ENCODE measurements at regions of chr2 and their contacts with region 1.

Region 1: DNA sequence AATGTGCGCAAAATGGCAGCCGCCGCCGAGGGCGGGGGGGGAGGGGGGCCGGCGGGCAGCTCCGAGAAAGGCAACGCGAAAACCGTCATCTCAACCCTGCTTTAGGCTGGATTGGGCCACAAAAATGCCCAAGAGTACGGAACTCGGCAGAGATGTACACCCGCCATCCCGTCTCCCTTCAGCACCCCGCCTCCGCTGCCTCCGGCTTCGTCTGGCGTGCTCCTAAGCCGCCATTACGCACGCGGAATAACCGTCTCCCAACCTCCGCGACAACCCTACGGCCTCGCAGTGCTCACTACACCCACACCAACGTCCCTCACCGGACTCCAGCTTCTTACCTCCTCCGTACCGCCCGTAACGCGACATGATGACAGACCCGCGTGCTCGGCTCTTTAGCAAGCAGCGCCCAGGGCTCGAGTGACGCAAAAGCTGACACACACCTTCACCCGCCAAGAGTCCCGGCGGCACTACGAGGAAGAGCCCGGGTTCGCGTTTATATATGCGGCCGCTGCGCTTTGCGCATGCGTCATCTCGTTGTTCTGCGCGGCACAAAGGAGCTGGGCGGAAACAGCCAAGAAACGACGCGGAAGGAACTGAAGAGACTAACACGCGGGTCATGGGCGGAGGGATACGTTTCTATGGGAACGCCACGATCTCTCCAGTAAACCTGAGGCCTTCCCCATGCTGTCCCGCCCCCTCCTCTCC is at the start of gene SRSF7:
- DNase-seq: peak; percentile 94 to 99 (median 98)
- ATAC-seq: peak; percentile 71 to 75
- H3K4me3 Mint-ChIP-seq: peak within 1 kb of the TSS; percentile 97 to 100 (median 99)
- H3K27ac Mint-ChIP-seq: peak within 1 kb of the TSS; percentile 96 to 100 (median 100)
- H3K4me1 Mint-ChIP-seq: peaks cover 33 to 63% (median 56%) of the 10 kb centered on the region in 4 donors
- H3K27me3 Mint-ChIP-seq: peaks cover 0 to 9% (median 0%) of the 10 kb centered on the region in 5 donors
- polyA plus RNA-seq, gene SRSF7: 164 to 172 (median 169) TPM

Region 2: GRCh38 chr2:36966370-36967235 is 1784.4 kb before region 1 on chr2 and contains the start of gene STRN:
- POLR2A ChIA-PET with region 1: interaction called, 13 read pairs
- DNase-seq: peak; percentile 94 to 99 (median 98)
- ATAC-seq: peak; percentile 88 to 90
- H3K4me3 Mint-ChIP-seq: peak within 1 kb of the TSS; percentile 92 to 98 (median 97)
- H3K27ac Mint-ChIP-seq: peak within 1 kb of the TSS; percentile 97 to 100 (median 98)
- H3K4me1 Mint-ChIP-seq: peaks cover 33 to 55% (median 47%) of the 10 kb centered on the region in 4 donors
- H3K27me3 Mint-ChIP-seq: peaks cover 0 to 3% (median 0%) of the 10 kb centered on the region in 5 donors
- polyA plus RNA-seq, gene STRN: 6.8 to 10.8 (median 7.8) TPM

Region 3: DNA sequence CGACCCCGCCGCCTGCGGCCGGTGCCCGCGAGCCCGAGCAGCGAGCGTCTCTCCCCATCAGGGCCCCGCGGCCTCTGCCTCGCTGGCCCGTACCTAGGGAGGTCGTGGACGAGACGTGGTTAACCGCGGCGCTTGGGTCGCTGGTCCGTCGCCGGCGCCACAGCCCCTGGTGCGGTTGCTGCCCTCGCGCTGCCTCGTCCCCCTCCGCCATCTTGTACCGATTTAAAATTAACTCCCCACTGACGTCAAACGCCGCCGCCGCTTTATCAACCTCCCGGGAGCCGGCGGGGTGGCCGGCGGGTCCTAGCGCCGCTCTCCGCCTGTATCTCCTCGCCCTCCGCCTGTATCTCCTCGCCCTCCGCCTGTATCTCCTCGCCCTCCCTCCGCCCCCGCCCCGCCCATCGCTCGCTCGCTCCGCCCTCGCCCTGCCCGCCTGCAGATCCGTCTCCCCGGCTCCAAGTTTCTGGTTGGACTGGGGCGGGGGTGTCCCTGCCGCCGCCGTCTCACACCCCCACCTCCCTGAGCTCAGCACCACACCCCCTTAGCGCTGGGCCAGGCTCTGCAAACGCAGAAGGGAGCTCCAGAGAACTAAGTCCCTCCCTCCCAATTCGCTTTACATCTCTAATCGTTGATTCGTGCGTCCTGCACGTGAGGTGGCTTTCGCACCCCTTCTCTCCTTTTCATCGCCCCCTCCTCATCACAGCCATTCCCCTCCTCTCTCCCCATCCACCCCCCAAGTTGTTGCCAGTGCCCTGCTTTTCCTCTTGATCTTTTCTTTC is 373.8 kb before region 1 on chr2 and contains the start of gene ATL2:
- POLR2A ChIA-PET with region 1: interaction called, 24 read pairs
- DNase-seq: peak; percentile 87 to 95 (median 90)
- ATAC-seq: peak; percentile 81 to 83
- H3K4me3 Mint-ChIP-seq: peak within 1 kb of the TSS; percentile 87 to 99 (median 98)
- H3K27ac Mint-ChIP-seq: peak within 1 kb of the TSS; percentile 87 to 98 (median 96)
- H3K4me1 Mint-ChIP-seq: peaks cover 36 to 73% (median 67%) of the 10 kb centered on the region in 4 donors
- H3K27me3 Mint-ChIP-seq: no peaks in the 10 kb centered on the region
- polyA plus RNA-seq, gene ATL2: 10.6 to 24.2 (median 14.2) TPM

Region 4: GRCh38 chr2:38581193-38582147 is 169.6 kb before region 1 on chr2:
- POLR2A ChIA-PET with region 1: interaction called, 16 read pairs
- DNase-seq: peak in 8 of 10 donors; percentile 10 to 81 (median 60)
- ATAC-seq: peak; percentile 78 to 89
- H3K4me3 Mint-ChIP-seq: no peak overlapping the region
- H3K27ac Mint-ChIP-seq: no peak overlapping the region
- H3K4me1 Mint-ChIP-seq: peaks cover 0 to 2% (median 0%) of the 10 kb centered on the region in 4 donors
- H3K27me3 Mint-ChIP-seq: no peaks in the 10 kb centered on the region

Region 5: DNA sequence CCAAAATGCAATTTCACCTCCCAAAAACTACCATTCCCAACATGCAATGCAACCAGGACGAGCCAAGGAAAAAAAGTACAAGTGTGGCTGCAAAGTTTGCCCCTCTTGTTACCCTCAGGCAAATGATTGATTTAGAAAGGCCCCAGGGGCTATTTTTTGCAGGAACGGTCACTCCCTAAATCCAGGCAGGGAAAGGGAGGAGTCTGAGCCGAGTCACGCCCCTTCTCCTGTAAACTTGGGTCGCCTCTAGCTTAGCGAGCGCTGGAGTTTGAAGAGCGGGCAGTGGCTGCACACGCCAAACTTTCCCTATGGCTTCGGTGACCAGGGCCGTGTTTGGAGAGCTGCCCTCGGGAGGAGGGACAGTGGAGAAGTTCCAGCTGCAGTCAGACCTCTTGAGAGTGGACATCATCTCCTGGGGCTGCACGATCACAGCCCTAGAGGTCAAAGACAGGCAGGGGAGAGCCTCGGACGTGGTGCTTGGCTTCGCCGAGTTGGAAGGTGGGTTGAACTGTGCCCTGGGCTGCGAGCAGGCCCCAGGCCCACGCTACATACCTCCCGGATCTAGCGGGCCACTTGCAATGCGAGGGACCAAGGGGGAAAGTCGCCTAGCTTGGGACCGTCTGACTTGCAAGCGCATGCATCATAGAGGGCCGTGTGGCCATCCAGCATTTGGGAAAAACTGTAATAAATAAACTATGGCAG is 85.0 kb before region 1 on chr2 and contains the start of gene GALM:
- POLR2A ChIA-PET with region 1: interaction called, 35 read pairs
- DNase-seq: peak in 8 of 10 donors; percentile 13 to 68 (median 46)
- ATAC-seq: peak; percentile 40 to 56
- H3K4me3 Mint-ChIP-seq: peak within 1 kb of the TSS; percentile 82 to 89 (median 87)
- H3K27ac Mint-ChIP-seq: peak within 1 kb of the TSS; percentile 81 to 96 (median 93)
- H3K4me1 Mint-ChIP-seq: peaks cover 13 to 53% (median 38%) of the 10 kb centered on the region in 4 donors
- H3K27me3 Mint-ChIP-seq: no peaks in the 10 kb centered on the region
- polyA plus RNA-seq, gene GALM: 10.6 to 15.6 (median 13.9) TPM

Region 6: GRCh38 chr2:38778687-38779082 is 27.6 kb after region 1 on chr2:
- POLR2A ChIA-PET with region 1: interaction called, 33 read pairs
- DNase-seq: no peak
- ATAC-seq: no peak
- H3K4me3 Mint-ChIP-seq: peak overlapping the region; percentile 95 to 100 (median 99)
- H3K27ac Mint-ChIP-seq: peak overlapping the region; percentile 94 to 99 (median 98)
- H3K4me1 Mint-ChIP-seq: peaks cover 9 to 27% (median 21%) of the 10 kb centered on the region in 4 donors
- H3K27me3 Mint-ChIP-seq: peaks cover 0 to 16% (median 3%) of the 10 kb centered on the region in 5 donors

Region 7: DNA sequence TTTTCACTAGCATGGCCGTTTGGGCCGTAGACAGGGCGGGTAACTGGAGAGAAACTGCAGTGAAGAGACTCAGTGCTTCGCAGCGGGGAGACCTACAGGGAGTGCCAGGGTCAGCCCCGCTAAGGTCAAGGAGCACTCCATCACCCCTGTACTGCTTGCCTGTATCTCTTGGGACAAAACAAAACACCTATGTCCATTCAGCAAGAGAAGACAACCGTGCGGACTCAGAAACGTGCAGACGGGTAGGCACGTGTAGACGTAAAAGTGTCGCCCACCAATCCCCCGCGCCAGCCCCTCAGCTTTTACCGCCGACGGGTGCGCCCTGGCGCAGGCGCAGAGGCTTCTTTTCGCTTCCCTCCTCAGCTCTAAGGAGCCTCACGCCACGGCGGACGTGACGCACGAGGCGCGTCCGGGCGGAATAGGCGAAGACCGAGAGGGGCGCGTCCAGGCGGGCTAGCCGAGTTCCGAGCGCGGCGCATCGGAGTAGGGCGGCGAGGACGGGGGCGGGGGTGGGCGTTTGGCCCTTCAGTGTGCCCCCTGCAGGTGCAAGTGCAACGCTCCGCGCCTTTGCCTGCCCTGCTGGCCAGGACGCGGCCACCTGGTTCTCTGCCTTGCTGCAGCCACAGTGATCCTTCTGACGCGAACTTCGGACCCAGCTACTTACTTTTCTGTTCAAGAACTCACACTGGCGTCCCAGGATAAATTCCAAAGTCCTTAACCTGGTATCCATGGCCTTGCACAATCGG is 373.1 kb after region 1 on chr2:
- POLR2A ChIA-PET with region 1: interaction called, 13 read pairs
- DNase-seq: peak; percentile 89 to 98 (median 96)
- ATAC-seq: peak; percentile 68 to 80
- H3K4me3 Mint-ChIP-seq: peak overlapping the region; percentile 85 to 99 (median 94)
- H3K27ac Mint-ChIP-seq: peak overlapping the region; percentile 89 to 99 (median 95)
- H3K4me1 Mint-ChIP-seq: peaks cover 16 to 68% (median 52%) of the 10 kb centered on the region in 4 donors
- H3K27me3 Mint-ChIP-seq: no peaks in the 10 kb centered on the region